Naive thymus-derived CD4-positive, alpha-beta T cell (primary cell): ENCODE measurements at regions of chr11 and their contacts with region 1.

Region 1: DNA sequence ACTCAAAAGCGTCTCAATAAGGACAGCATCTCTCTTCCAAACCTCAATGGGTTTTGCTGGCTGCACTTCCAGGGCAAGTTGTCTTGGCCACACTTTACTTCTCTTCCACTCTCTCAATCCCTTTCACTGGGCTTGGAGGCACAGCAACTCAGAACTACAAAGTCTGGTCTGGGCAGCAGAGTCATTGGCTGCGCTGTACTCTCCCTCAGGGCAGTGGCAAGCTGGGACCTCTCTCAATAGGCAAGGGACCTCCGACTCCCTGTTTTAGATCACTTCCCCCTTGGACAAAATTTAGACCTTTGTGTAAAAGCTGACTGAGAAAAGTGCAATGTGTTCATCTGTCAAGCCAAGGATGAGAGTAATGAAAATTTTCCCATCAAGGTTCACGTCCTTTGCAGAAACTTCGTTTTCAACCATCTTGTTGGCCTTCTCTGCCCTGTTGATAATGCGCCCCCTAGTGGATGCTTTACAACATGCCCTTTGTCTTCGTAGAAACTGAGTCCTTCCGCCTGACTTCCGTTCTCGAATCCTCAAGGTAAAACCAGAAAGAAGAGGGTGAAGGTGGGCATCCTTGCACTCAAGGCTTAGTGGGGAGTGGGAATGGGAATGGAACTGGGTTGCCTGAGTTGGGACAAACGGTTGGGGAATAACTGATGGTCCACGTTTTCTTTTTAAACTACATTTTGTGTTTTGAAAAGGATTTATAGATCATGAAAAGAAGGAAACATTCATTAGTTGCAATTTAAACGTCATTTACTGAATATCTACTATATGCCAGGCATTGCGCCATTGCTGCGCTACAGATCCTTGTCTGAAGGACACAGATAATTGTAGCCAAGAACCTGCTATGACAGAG is 99.1 kb downstream of the CD44 start:
- DNase-seq: peak in 7 of 9 donors; percentile 28 to 69 (median 47)
- ATAC-seq: peak; percentile 46
- H3K4me3 ChIP-seq: no peak overlapping the region
- H3K4me3 Mint-ChIP-seq: peak overlapping the region in 5 of 10 donors; percentile 20 to 74 (median 61)
- H3K27ac ChIP-seq: no peak overlapping the region
- H3K27ac Mint-ChIP-seq: peak overlapping the region; percentile 39 to 90 (median 73)
- H3K4me1 ChIP-seq: peaks cover 40 to 46% of the 10 kb centered on the region in 2 donors
- H3K4me1 Mint-ChIP-seq: peaks cover 51 to 94% (median 80%) of the 10 kb centered on the region in 7 donors
- H3K27me3 ChIP-seq: no peaks in the 10 kb centered on the region
- H3K27me3 Mint-ChIP-seq: peaks cover 0 to 9% (median 0%) of the 10 kb centered on the region in 5 donors

Region 2: DNA sequence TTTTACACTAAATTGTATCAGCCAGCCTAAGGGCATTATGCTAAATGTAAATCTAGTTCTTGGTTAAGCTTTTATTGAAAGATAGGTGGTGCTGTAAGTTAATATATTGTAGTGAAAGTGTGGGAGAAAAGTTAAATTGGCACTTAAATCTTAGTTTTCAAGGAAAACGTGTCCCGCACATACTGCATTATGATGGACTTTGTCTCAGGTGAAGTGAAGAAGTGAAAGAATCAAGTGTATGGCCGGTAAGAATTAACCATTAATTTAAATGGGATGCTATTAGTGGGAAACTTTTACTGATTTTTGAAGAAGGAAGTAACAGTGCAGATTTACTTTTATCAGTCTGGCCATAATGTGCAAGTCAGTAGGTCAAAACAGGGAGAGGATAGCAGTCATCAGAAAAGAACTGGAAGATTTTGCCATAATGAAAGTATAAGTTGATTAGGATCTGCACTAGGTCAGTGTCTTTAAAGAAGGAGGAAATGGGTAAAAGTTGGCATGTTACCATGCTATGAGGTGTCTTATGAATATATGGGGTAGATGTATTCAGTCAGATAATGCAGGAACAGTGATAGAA is 240.0 kb before region 1 on chr11:
- CTCF ChIA-PET with region 1: no interaction called
- POLR2A ChIA-PET with region 1: interaction called, 4 read pairs
- intact Hi-C with region 1: loop called (anchors 1 kb)
- DNase-seq: peak in 6 of 9 donors; percentile 27 to 54 (median 44)
- ATAC-seq: peak; percentile 72
- H3K4me3 ChIP-seq: no peak overlapping the region
- H3K4me3 Mint-ChIP-seq: peak overlapping the region in 9 of 10 donors; percentile 6 to 81 (median 34)
- H3K27ac ChIP-seq: peak overlapping the region; percentile 8
- H3K27ac Mint-ChIP-seq: peak overlapping the region; percentile 15 to 90 (median 69)
- H3K4me1 ChIP-seq: peaks cover 15 to 19% of the 10 kb centered on the region in 2 donors
- H3K4me1 Mint-ChIP-seq: peaks cover 19 to 38% (median 35%) of the 10 kb centered on the region in 7 donors
- H3K27me3 ChIP-seq: no peaks in the 10 kb centered on the region
- H3K27me3 Mint-ChIP-seq: no peaks in the 10 kb centered on the region

Region 3: DNA sequence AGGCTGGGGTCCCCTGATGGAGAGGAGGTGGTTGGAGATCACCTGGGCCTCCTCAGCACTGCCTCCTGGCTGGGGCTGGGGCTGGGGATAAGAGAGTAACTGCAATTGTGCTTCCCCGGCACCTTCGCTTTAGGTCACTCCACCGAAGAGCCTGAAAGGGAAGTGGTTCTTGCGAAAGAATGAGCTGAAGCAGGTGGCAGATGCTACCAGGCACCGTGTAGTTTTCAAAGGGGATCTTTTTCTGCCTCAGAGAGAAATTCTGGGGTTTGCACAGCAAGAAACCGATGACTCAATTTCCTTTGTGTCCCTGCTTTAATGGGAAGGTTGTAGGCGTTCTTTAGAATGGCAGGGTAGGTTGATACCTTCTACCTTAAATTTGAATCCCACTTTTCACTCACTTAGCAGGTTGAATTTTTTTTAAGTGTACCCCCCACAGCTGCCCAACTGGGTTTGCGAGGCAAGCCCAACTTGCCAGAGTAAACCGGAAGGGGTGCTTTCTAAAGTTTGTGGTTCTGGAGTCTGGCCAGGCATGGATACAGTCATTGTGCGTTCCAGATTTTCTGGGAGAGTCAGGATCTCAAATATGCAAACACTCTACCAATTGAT is 93.8 kb before region 1 on chr11:
- CTCF ChIA-PET with region 1: interaction called, 3 read pairs
- POLR2A ChIA-PET with region 1: interaction called, 6 read pairs
- intact Hi-C with region 1: loop called (anchors 2 to 5 kb)
- DNase-seq: peak in 8 of 9 donors; percentile 59 to 85 (median 74)
- ATAC-seq: peak; percentile 59
- H3K4me3 ChIP-seq: peak overlapping the region; percentile 97
- H3K4me3 Mint-ChIP-seq: peak overlapping the region; percentile 83 to 99 (median 94)
- H3K27ac ChIP-seq: peak overlapping the region; percentile 88
- H3K27ac Mint-ChIP-seq: peak overlapping the region; percentile 79 to 100 (median 92)
- H3K4me1 ChIP-seq: peaks cover 68 to 74% of the 10 kb centered on the region in 2 donors
- H3K4me1 Mint-ChIP-seq: peaks cover 62 to 83% (median 77%) of the 10 kb centered on the region in 7 donors
- H3K27me3 ChIP-seq: no peaks in the 10 kb centered on the region
- H3K27me3 Mint-ChIP-seq: no peaks in the 10 kb centered on the region

Region 4: DNA sequence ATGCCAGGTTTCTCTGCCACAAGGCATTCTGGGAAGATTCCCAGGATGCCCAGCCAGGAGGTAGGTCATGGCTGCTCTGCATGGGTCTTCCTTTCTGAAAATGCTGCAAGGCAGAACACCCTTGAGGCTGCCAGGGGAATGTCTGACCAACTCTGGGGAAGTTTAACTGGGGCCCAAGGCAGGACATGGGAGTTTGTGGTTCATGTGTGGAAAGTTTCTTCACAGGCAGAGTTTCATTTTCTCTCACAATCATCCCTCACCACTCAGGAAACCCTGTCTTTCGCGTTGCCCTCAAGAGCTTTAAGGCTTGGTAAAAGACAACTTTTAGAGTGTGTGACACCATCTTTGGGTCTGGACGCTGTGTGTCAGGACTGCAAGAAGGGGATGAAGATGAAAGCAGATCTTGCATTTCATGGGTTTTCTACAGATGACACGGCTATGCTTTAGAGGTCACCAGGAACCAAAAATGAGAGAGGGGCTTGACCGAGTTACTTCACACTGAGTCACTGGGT is 34.4 kb after region 1 on chr11:
- CTCF ChIA-PET with region 1: no interaction called
- POLR2A ChIA-PET with region 1: interaction called, 3 read pairs
- intact Hi-C with region 1: loop called in 1 of 2 experiments (anchors 5 kb)
- DNase-seq: peak in 5 of 9 donors; percentile 11 to 58 (median 15)
- ATAC-seq: peak; percentile 85
- H3K4me3 ChIP-seq: peak overlapping the region; percentile 15
- H3K4me3 Mint-ChIP-seq: peak overlapping the region in 9 of 10 donors; percentile 26 to 54 (median 45)
- H3K27ac ChIP-seq: no peak overlapping the region
- H3K27ac Mint-ChIP-seq: peak overlapping the region; percentile 22 to 94 (median 82)
- H3K4me1 ChIP-seq: peaks cover 14 to 21% of the 10 kb centered on the region in 2 donors
- H3K4me1 Mint-ChIP-seq: peaks cover 21 to 56% (median 51%) of the 10 kb centered on the region in 7 donors
- H3K27me3 ChIP-seq: no peaks in the 10 kb centered on the region
- H3K27me3 Mint-ChIP-seq: peaks cover 0 to 9% (median 0%) of the 10 kb centered on the region in 5 donors

Region 5: GRCh38 chr11:35404388-35404775 is 166.3 kb after region 1 on chr11:
- CTCF ChIA-PET with region 1: no interaction called
- POLR2A ChIA-PET with region 1: no interaction called
- intact Hi-C with region 1: no loop called
- DNase-seq: peak in 1 of 9 donors; percentile 4
- ATAC-seq: peak; percentile 37
- H3K4me3 ChIP-seq: no peak overlapping the region
- H3K4me3 Mint-ChIP-seq: peak overlapping the region in 1 of 10 donors; percentile 7
- H3K27ac ChIP-seq: no peak overlapping the region
- H3K27ac Mint-ChIP-seq: no peak overlapping the region
- H3K4me1 ChIP-seq: no peaks in the 10 kb centered on the region
- H3K4me1 Mint-ChIP-seq: peaks cover 0 to 4% (median 0%) of the 10 kb centered on the region in 7 donors
- H3K27me3 ChIP-seq: no peaks in the 10 kb centered on the region
- H3K27me3 Mint-ChIP-seq: peaks cover 0 to 24% (median 5%) of the 10 kb centered on the region in 5 donors

Region 6: DNA sequence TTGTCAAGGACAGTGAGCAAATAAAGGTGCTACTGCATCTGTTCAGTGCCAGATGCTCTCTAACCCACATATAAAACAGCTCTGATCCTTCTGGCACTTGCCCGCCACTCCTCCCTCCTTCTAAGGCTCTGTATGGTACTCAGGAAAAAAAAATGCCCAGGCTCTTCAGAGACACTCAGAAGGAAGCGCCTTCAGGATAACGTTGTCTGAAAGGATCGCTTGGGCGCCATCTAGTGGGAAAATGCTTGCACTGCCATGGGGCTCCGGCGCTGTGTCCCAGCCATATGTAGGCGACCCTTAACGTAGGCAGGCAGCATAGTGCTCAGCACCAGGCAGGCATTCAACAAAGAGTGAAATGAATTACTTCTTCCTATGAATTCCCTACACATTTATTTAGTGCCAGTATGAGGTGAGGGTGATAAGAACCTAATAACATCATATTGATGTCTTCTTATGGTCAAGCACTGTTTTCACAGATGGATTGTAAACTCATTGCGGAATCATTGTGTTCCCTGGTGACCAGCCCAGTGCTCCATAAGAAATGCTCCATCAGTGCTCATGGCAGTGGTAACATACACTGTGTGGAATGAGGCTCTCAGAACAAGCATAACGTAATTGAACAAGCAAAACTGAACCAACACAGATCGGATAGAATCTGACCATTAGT is 247.7 kb after region 1 on chr11:
- CTCF ChIA-PET with region 1: interaction called, 5 read pairs
- POLR2A ChIA-PET with region 1: no interaction called
- intact Hi-C with region 1: loop called in 1 of 2 experiments (anchors 10 kb)
- DNase-seq: peak; percentile 35 to 71 (median 52)
- ATAC-seq: peak; percentile 84
- H3K4me3 ChIP-seq: no peak overlapping the region
- H3K4me3 Mint-ChIP-seq: no peak overlapping the region
- H3K27ac ChIP-seq: no peak overlapping the region
- H3K27ac Mint-ChIP-seq: no peak overlapping the region
- H3K4me1 ChIP-seq: no peaks in the 10 kb centered on the region
- H3K4me1 Mint-ChIP-seq: peaks cover 0 to 3% (median 0%) of the 10 kb centered on the region in 7 donors
- H3K27me3 ChIP-seq: no peaks in the 10 kb centered on the region
- H3K27me3 Mint-ChIP-seq: peaks cover 30 to 52% (median 48%) of the 10 kb centered on the region in 5 donors